Activated CD4-positive, alpha-beta memory T cell treated with anti-CD3 and anti-CD28 coated beads for 36 hours (primary cell): ENCODE measurements at regions of chr7 and their contacts with region 1.

Region 1: DNA sequence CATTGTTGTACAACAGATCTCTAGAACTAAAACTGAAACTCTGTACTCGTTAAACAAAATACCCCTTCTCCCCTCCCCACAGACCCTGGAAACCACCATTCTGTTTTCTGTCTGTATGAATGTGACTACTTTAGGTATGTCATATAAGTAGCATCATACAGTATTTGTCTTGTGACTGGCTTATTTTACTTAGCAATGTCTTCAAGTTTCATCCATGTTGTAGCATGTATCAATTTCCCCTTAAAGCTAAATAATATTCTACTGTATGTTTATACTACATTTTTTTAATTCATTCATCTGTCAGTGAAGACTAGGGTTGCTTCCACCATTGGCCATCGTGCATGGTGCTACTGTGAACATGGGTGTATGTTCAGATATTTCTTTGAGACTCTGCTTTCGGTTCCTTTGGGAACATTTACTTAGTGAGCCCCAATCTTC is 71.2 kb upstream of the RPA3 start:
- DNase-seq: no peak
- H3K4me3 Mint-ChIP-seq: no peak overlapping the region
- H3K27ac Mint-ChIP-seq: no peak overlapping the region
- H3K4me1 Mint-ChIP-seq: peaks cover 7% of the 10 kb centered on the region
- H3K27me3 Mint-ChIP-seq: no peaks in the 10 kb centered on the region

Region 2: DNA sequence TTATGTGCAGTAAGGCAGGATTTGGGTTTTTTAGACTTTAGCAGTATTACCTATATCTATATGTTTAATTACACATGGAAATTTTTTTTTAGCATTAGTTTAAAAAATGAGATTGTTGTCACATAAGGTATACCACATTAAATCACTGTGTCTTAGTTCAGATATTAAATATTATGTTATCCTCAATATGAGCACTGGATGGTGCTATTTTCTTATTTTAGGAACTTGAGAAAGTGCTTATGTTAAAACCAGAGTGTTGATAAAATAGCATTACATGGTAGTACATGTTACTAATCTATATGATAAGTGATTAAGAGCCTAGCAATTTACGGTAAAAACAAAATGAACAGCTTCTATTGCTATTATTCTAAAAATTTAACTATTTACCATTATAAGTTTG is 194.1 kb before region 1 on chr7:
- CTCF ChIA-PET with region 1: no interaction called
- POLR2A ChIA-PET with region 1: no interaction called
- intact Hi-C with region 1: no loop called
- DNase-seq: no peak
- H3K4me3 Mint-ChIP-seq: no peak overlapping the region
- H3K27ac Mint-ChIP-seq: no peak overlapping the region
- H3K4me1 Mint-ChIP-seq: no peaks in the 10 kb centered on the region
- H3K27me3 Mint-ChIP-seq: no peaks in the 10 kb centered on the region

Region 3: GRCh38 chr7:7772397-7772821 is 17.2 kb before region 1 on chr7:
- CTCF ChIA-PET with region 1: no interaction called
- POLR2A ChIA-PET with region 1: no interaction called
- intact Hi-C with region 1: loop called (anchors 1 kb)
- DNase-seq: peak; percentile 41
- H3K4me3 Mint-ChIP-seq: no peak overlapping the region
- H3K27ac Mint-ChIP-seq: no peak overlapping the region
- H3K4me1 Mint-ChIP-seq: peaks cover 19% of the 10 kb centered on the region
- H3K27me3 Mint-ChIP-seq: no peaks in the 10 kb centered on the region